Ascending aorta (tissue), 2 donors: ENCODE measurements at regions of chr15 and their contacts with region 1.

Region 1: GRCh38 chr15:59688841-59689625 is at the start of gene BNIP2:
- DNase-seq: peak; percentile 97 to 100
- H3K4me3 ChIP-seq: peak within 1 kb of the TSS; percentile 86 to 93
- H3K27ac ChIP-seq: peak within 1 kb of the TSS; percentile 96 to 99
- H3K4me1 ChIP-seq: peaks cover 0 to 19% of the 10 kb centered on the region in 2 donors
- H3K27me3 ChIP-seq: no peaks in the 10 kb centered on the region
- CTCF ChIP-seq: peak in 1 of 3 experiments; percentile 2
- total RNA-seq, gene BNIP2: 60.1 TPM

Region 2: GRCh38 chr15:58933281-58934113 is 755.5 kb before region 1 on chr15 and contains the start of gene SLTM:
- intact Hi-C with region 1: loop called (anchors 2 kb)
- DNase-seq: peak; percentile 73 to 98
- H3K4me3 ChIP-seq: peak within 1 kb of the TSS; percentile 83 to 92
- H3K27ac ChIP-seq: peak within 1 kb of the TSS; percentile 98
- H3K4me1 ChIP-seq: peaks cover 0 to 13% of the 10 kb centered on the region in 2 donors
- H3K27me3 ChIP-seq: no peaks in the 10 kb centered on the region
- CTCF ChIP-seq: peak in 2 of 3 experiments; percentile 20 to 24
- total RNA-seq, gene SLTM: 109 TPM

Region 3: DNA sequence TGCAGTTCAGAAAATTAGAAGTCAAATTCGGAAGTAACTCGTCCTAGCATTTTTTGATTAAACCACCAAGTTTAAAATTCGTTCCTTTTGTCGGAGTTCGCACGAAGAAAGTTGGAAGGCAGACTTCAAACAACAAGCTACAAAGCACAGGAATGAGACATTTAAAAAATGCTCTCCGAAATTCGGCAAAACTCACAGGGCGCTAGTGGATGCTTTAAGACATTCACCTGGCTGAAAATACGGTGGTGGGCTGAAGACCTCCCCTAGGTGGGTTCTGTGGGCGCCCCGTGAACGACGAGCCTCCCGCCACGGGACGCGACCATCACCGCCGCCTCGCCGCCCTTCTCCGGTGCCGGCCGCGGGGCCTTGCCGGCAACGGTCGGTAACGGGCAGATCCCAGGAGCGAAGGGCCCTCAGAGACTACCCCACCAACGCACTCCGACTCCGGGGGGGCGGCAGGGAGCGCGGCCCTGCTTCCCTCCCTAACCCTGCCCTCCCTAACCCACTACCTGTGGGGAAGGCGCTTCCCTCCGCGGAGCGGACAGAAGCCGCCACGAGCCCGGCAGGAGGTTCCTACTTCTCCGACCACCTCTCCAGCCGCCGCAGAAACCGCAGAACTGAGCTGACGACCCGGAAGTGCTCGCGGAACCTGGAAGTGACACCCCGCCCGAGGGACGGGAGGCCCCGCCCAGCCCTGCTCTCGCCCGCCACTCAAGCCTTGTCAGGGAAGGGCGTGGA is 32.0 kb before region 1 on chr15 and contains the start of gene GTF2A2:
- intact Hi-C with region 1: loop called (anchors 1 kb)
- DNase-seq: peak; percentile 82 to 96
- H3K4me3 ChIP-seq: peak within 1 kb of the TSS; percentile 78 to 97
- H3K27ac ChIP-seq: peak within 1 kb of the TSS; percentile 83 to 85
- H3K4me1 ChIP-seq: peaks cover 5 to 8% of the 10 kb centered on the region in 2 donors
- H3K27me3 ChIP-seq: no peaks in the 10 kb centered on the region
- CTCF ChIP-seq: no peak
- total RNA-seq, gene GTF2A2: 1.4 TPM

Region 4: GRCh38 chr15:59711451-59712243 is 22.6 kb after region 1 on chr15:
- intact Hi-C with region 1: no loop called
- DNase-seq: no peak
- H3K4me3 ChIP-seq: no peak overlapping the region
- H3K27ac ChIP-seq: no peak overlapping the region
- H3K4me1 ChIP-seq: no peaks in the 10 kb centered on the region
- H3K27me3 ChIP-seq: no peaks in the 10 kb centered on the region
- CTCF ChIP-seq: no peak

Region 5: DNA sequence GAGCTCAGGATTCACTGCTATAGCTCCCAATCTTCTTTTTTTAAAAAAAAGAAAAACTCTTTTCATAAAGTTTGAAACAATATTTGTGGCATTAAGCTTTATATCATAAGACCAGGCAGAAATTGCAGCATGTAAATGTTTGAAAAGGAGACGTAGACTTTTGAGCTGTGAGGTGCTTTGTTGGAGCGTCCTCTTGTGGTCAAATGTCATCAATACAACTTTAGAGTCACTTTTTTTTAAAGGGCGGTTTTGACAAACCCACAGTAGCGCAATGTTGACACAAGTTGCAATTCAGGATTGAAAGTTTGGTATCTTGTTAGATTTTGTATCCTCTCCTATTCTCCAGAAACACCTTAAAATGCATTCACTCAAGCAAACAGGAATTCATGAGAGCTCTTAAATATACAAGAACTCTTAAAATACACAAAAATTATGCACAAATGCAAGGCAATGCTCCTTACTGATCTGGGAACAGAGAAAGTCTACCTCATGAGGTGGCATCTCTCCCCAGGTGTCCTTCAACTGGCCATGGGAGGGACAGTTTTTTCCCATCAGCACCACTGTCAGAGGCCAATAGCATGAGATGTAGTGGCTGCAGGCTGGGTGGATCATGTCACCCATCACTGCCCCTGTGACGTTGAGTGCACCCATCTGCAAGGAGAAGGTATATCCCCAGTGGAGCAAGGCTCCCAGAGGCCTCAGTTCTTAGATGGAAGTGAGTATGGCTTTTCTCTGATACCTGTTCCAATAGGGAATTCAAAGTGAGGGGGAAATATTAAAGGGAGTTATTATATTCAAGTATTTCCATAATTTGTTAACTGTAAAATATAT is 638.0 kb after region 1 on chr15:
- intact Hi-C with region 1: loop called (anchors 2 kb)
- DNase-seq: no peak
- H3K4me3 ChIP-seq: no peak overlapping the region
- H3K27ac ChIP-seq: no peak overlapping the region
- H3K4me1 ChIP-seq: no peaks in the 10 kb centered on the region
- H3K27me3 ChIP-seq: no peaks in the 10 kb centered on the region
- CTCF ChIP-seq: peak; percentile 43 to 65 (median 64)

Region 6: DNA sequence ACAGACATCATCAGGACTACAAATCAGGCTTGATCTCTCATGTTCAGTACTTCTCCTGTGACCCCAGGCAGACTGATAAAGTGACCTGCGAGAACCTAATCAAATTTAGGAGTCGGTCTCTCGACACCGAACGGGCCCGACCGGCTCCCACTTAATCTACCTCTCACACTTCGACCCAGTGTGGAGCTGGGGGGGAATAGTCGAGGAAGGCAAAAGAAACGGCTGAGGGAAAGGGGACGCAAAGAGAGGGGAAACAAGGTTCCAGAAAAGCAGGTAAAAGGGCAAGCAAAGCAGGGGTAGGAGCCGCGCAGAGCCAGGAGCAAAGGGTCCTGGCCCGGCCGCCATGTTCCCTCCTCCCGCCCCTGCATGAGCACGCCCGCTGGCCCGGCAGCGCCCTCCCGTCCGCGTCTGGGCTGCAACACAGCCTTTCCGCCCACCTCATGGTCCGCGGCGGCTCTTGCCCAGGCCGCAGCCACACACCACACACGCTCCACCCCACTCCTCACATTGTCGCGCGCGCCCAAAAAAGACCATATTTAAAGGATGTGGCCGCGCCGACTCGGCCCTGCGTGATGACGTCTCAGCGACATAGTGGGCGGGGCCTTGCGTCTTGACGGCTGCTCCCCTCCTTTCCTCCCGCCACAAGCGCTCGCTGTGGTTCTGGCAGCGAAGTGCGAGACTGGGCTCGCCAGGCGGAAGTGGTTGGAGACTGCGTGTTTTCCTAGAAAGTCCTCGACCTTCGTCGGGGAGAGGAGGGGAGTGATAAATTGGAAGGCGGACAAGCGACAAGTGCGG is 789.7 kb after region 1 on chr15 and contains the start of gene ICE2:
- intact Hi-C with region 1: loop called (anchors 10 kb)
- DNase-seq: peak; percentile 85 to 98
- H3K4me3 ChIP-seq: peak within 1 kb of the TSS; percentile 84 to 100
- H3K27ac ChIP-seq: peak within 1 kb of the TSS; percentile 95 to 98
- H3K4me1 ChIP-seq: peaks cover 0 to 22% of the 10 kb centered on the region in 2 donors
- H3K27me3 ChIP-seq: no peaks in the 10 kb centered on the region
- CTCF ChIP-seq: no peak
- total RNA-seq, gene ICE2: 45.1 TPM